Dendritic cell treated with granulocyte-macrophage colony-stimulating factor and Interleukin-4, amounts not matched to agents 40 ng/mL and 50 ng/mL, for 4 days (primary cell): ENCODE measurements at regions of chr3 and their contacts with region 1.

Region 1: GRCh38 chr3:171974986-171975837 is 64.2 kb upstream of the FNDC3B start:
- H3K4me3 Mint-ChIP-seq: no peak overlapping the region
- H3K27ac Mint-ChIP-seq: no peak overlapping the region
- H3K4me1 Mint-ChIP-seq: peaks cover 29% of the 10 kb centered on the region
- H3K27me3 Mint-ChIP-seq: no peaks in the 10 kb centered on the region

Region 2: GRCh38 chr3:171944511-171944952 is 30.7 kb before region 1 on chr3:
- intact Hi-C with region 1: loop called (anchors 5 kb)
- H3K4me3 Mint-ChIP-seq: no peak overlapping the region
- H3K27ac Mint-ChIP-seq: no peak overlapping the region
- H3K4me1 Mint-ChIP-seq: peaks cover 17% of the 10 kb centered on the region
- H3K27me3 Mint-ChIP-seq: no peaks in the 10 kb centered on the region

Region 3: GRCh38 chr3:172024679-172025078 is 49.5 kb after region 1 on chr3:
- intact Hi-C with region 1: loop called (anchors 1 kb)
- H3K4me3 Mint-ChIP-seq: no peak overlapping the region
- H3K27ac Mint-ChIP-seq: no peak overlapping the region
- H3K4me1 Mint-ChIP-seq: peaks cover 7% of the 10 kb centered on the region
- H3K27me3 Mint-ChIP-seq: no peaks in the 10 kb centered on the region